Mammary epithelial cell (primary cell): ENCODE measurements at regions of chr3 and their contacts with region 1.

Region 1: GRCh38 chr3:143135150-143135549 is 15.6 kb downstream of the CHST2 start:
- DNase-seq: peak; percentile 89
- H3K4me3 ChIP-seq: no peak overlapping the region
- H3K27ac ChIP-seq: peak overlapping the region; percentile 3
- H3K4me1 ChIP-seq: peaks cover 18% of the 10 kb centered on the region
- H3K27me3 ChIP-seq: no peaks in the 10 kb centered on the region
- CTCF ChIP-seq: peak; percentile 15 to 40

Region 2: DNA sequence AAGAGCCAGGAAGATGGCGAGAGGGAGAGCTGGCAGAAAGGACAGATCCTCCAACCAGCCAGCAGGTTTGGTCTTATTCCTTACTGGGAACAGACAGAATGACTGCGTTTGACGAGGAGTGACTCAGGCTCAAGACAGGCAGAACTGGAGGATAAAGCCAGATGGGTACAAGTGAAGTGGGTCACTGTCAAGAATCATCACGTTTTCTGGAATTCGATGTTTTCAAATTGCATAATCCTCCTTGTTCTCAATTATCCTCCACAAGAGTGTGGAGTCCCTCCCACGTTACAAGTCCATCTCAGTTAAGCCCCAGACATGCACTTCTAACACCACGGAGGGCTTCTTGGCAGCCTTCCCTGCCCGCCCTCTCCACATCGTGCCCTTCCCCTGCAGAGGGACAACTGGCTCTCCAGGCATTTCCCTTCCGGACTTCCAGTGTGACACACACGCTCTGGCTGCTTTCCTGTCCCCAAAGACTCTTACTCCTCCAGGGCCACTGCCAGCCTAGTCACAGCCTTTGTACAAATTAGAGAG is 167.6 kb after region 1 on chr3:
- CTCF ChIA-PET with region 1: no interaction called
- dilution Hi-C with region 1: no loop called
- in situ Hi-C with region 1: no loop called
- intact Hi-C with region 1: loop called (anchors 10 kb)
- DNase-seq: peak; percentile 80
- H3K4me3 ChIP-seq: no peak overlapping the region
- H3K27ac ChIP-seq: no peak overlapping the region
- H3K4me1 ChIP-seq: peaks cover 25% of the 10 kb centered on the region
- H3K27me3 ChIP-seq: no peaks in the 10 kb centered on the region
- CTCF ChIP-seq: peak in 1 of 2 donors; percentile 7

Region 3: DNA sequence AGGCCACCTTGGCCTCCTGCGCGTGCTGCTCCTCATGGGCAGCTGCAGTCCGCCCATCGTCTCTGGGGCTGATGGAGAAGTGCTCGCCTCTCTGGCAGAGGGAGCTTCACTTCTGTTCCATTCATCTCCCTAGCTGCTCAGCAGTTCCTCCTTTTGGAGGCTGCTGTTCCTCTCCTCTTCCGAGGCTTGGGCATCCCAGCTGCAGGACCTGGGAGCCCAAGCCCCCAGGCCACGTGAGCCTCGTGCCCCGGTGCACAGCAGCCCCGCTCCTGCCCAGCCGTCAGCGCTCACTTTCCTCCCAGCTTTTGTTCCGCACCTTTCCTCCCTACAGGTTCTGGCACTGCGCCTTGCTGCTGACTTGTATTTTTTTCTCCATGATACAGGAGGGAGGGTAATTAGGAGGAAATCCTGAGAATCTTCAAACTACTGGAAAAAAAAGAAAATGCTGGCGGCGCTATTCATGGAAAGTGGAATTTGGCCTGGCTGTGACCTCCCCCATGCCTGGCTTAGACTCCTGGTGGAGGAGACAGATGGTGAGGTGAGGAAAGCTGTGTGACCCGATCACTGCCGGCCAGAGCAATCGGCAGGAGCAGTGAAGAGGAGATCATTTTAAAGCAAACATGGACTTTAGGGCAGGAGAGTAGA is 194.5 kb after region 1 on chr3:
- CTCF ChIA-PET with region 1: no interaction called
- dilution Hi-C with region 1: no loop called
- in situ Hi-C with region 1: no loop called
- intact Hi-C with region 1: loop called (anchors 5 kb)
- DNase-seq: no peak
- H3K4me3 ChIP-seq: no peak overlapping the region
- H3K27ac ChIP-seq: no peak overlapping the region
- H3K4me1 ChIP-seq: no peaks in the 10 kb centered on the region
- H3K27me3 ChIP-seq: peaks cover 5% of the 10 kb centered on the region
- CTCF ChIP-seq: no peak

Region 4: GRCh38 chr3:143433787-143434378 is 298.7 kb after region 1 on chr3:
- CTCF ChIA-PET with region 1: no interaction called
- dilution Hi-C with region 1: no loop called
- in situ Hi-C with region 1: no loop called
- intact Hi-C with region 1: loop called (anchors 10 kb)
- DNase-seq: no peak
- H3K4me3 ChIP-seq: no peak overlapping the region
- H3K27ac ChIP-seq: no peak overlapping the region
- H3K4me1 ChIP-seq: no peaks in the 10 kb centered on the region
- H3K27me3 ChIP-seq: no peaks in the 10 kb centered on the region
- CTCF ChIP-seq: peak; percentile 59 to 61

Region 5: DNA sequence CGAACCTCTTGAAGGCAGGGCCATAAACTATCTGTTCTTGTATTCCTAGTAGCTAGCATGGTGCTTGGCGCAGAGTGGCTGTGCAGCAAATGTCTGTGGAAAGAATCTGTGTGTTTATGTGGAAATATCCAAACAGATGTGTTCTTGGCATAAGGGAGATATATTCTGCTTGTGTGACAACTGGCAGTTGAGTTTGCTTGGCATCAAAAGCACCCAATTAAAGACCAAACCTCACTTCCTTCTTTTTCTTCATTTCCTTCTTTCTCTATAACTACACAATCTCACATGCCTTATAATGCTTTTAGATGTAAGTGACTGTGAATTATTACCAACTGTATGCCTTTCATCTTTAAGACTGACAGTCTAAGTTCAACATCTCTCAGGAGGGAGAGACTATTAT is 416.6 kb after region 1 on chr3:
- CTCF ChIA-PET with region 1: no interaction called
- dilution Hi-C with region 1: no loop called
- in situ Hi-C with region 1: no loop called
- intact Hi-C with region 1: no loop called
- DNase-seq: no peak
- H3K4me3 ChIP-seq: no peak overlapping the region
- H3K27ac ChIP-seq: no peak overlapping the region
- H3K4me1 ChIP-seq: no peaks in the 10 kb centered on the region
- H3K27me3 ChIP-seq: no peaks in the 10 kb centered on the region
- CTCF ChIP-seq: no peak